IMR-90 (cell line): ENCODE measurements at regions of chr17 and their contacts with region 1.

Region 1: DNA sequence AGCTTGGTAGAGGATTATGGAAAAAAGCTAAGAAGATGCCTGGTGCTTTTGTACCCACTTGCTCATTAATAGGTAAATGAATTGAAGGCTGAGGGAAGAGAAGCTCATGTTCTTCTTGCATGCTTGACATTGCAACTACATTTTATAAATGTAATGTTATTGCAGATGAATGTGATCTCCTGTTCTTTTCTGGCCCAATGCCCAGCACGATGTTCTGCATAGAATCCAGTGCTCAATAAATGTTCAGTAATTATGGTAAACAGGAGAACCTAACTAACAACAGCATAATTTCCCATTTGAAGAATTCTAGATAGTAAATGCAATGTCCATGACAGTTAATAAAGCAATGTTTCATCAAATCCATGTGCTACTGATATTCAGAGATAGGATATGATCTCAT is 638.2 kb upstream of the SOX9 start:
- DNase-seq: no peak
- ATAC-seq: no peak
- H3K4me3 ChIP-seq: no peak overlapping the region
- H3K27ac ChIP-seq: no peak overlapping the region
- H3K4me1 ChIP-seq: no peaks in the 10 kb centered on the region
- H3K27me3 ChIP-seq: no peaks in the 10 kb centered on the region
- CTCF ChIP-seq: no peak
- POLR2A ChIP-seq: no peak
- RAD21 ChIP-seq: no peak

Region 2: GRCh38 chr17:72104164-72104862 is 621.7 kb after region 1 on chr17:
- CTCF ChIA-PET with region 1: no interaction called
- POLR2A ChIA-PET with region 1: no interaction called
- dilution Hi-C with region 1: no loop called
- in situ Hi-C with region 1: loop called (anchors 10 kb)
- intact Hi-C with region 1: no loop called
- DNase-seq: no peak
- ATAC-seq: no peak
- H3K4me3 ChIP-seq: no peak overlapping the region
- H3K27ac ChIP-seq: no peak overlapping the region
- H3K4me1 ChIP-seq: peaks cover 3% of the 10 kb centered on the region
- H3K27me3 ChIP-seq: no peaks in the 10 kb centered on the region
- CTCF ChIP-seq: no peak
- POLR2A ChIP-seq: no peak
- RAD21 ChIP-seq: no peak